ENCODE measurements at regions of chr1 and their contacts with region 1.

Region 1: GRCh38 chr1:184805667-184806295 is 51.1 kb upstream of the EDEM3 start:
- DNase-seq: peak; percentile 49 to 79 (median 68)
- ATAC-seq: peak; percentile 94
- H3K4me3 ChIP-seq: no peak overlapping the region
- H3K4me3 Mint-ChIP-seq: peak overlapping the region in 2 of 10 donors; percentile 2 to 27
- H3K27ac ChIP-seq: no peak overlapping the region
- H3K27ac Mint-ChIP-seq: peak overlapping the region in 2 of 9 donors; percentile 7 to 16
- H3K4me1 ChIP-seq: no peaks in the 10 kb centered on the region
- H3K4me1 Mint-ChIP-seq: peaks cover 4 to 6% (median 5%) of the 10 kb centered on the region in 7 donors
- H3K27me3 ChIP-seq: no peaks in the 10 kb centered on the region
- H3K27me3 Mint-ChIP-seq: no peaks in the 10 kb centered on the region

Region 2: DNA sequence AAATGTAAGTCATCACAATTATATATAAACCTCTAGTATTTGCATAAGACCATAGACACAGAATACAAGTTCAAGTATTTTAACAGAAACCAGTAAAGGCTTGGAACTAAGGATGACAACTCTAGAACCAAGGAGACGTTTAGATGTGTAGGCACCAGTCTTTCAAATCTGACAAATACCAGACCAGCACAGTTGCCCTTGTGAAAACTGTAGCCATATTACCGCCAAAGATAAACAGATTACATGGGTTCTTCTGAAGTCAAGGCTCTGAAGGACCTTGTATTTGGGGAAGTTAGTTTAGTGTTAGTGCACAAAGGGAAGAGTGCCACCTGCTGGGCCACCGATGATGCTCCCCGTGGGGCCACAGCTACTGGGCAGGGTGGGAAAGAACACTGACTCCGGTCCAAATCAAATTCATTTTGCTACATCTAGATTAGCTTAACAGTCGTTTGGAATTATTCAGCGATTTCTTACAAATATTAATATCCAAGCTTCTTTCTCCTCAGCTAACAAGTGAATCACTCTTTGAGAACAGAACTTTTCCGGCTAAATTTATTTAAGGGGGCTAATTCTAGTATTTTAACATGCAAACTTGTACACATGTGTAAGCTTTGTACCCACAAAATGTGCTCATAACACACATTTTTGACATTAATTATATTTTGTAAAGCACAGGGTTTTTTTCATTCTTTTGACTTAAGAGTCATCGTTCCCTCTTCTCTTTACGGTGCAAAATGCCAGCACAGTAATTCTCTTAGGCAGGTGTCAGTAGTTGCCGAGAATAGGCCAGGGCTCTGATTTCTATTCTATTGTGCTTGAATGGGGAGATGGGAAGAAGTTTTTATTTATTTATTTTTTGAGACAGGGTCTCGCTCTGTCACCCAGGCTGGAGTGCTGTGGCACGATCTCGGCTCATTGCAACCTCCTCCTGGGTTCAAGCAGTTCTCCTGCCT is 176.5 kb after region 1 on chr1:
- CTCF ChIA-PET with region 1: interaction called, 28 read pairs
- POLR2A ChIA-PET with region 1: no interaction called
- intact Hi-C with region 1: loop called (anchors 1 kb)
- DNase-seq: peak; percentile 28 to 69 (median 47)
- ATAC-seq: peak; percentile 99
- H3K4me3 ChIP-seq: no peak overlapping the region
- H3K4me3 Mint-ChIP-seq: no peak overlapping the region
- H3K27ac ChIP-seq: no peak overlapping the region
- H3K27ac Mint-ChIP-seq: no peak overlapping the region
- H3K4me1 ChIP-seq: no peaks in the 10 kb centered on the region
- H3K4me1 Mint-ChIP-seq: peaks cover 0 to 7% (median 0%) of the 10 kb centered on the region in 7 donors
- H3K27me3 ChIP-seq: no peaks in the 10 kb centered on the region
- H3K27me3 Mint-ChIP-seq: peaks cover 17 to 45% (median 29%) of the 10 kb centered on the region in 5 donors

Region 3: GRCh38 chr1:185170291-185170848 is 364.6 kb after region 1 on chr1:
- CTCF ChIA-PET with region 1: interaction called, 28 read pairs
- POLR2A ChIA-PET with region 1: no interaction called
- intact Hi-C with region 1: loop called (anchors 1 kb)
- DNase-seq: peak in 8 of 9 donors; percentile 37 to 71 (median 65)
- ATAC-seq: peak; percentile 84
- H3K4me3 ChIP-seq: no peak overlapping the region
- H3K4me3 Mint-ChIP-seq: peak overlapping the region in 4 of 10 donors; percentile 35 to 56 (median 53)
- H3K27ac ChIP-seq: no peak overlapping the region
- H3K27ac Mint-ChIP-seq: peak overlapping the region in 4 of 9 donors; percentile 6 to 62 (median 43)
- H3K4me1 ChIP-seq: peaks cover 0 to 4% of the 10 kb centered on the region in 2 donors
- H3K4me1 Mint-ChIP-seq: peaks cover 0 to 17% (median 5%) of the 10 kb centered on the region in 7 donors
- H3K27me3 ChIP-seq: no peaks in the 10 kb centered on the region
- H3K27me3 Mint-ChIP-seq: no peaks in the 10 kb centered on the region

Region 4: GRCh38 chr1:185309566-185309965 is 503.8 kb after region 1 on chr1:
- CTCF ChIA-PET with region 1: interaction called, 3 read pairs
- POLR2A ChIA-PET with region 1: no interaction called
- intact Hi-C with region 1: loop called in 1 of 2 experiments (anchors 5 kb)
- DNase-seq: no peak
- ATAC-seq: no peak
- H3K4me3 ChIP-seq: no peak overlapping the region
- H3K4me3 Mint-ChIP-seq: no peak overlapping the region
- H3K27ac ChIP-seq: no peak overlapping the region
- H3K27ac Mint-ChIP-seq: no peak overlapping the region
- H3K4me1 ChIP-seq: peaks cover 26 to 28% of the 10 kb centered on the region in 2 donors
- H3K4me1 Mint-ChIP-seq: peaks cover 35 to 59% (median 41%) of the 10 kb centered on the region in 7 donors
- H3K27me3 ChIP-seq: no peaks in the 10 kb centered on the region
- H3K27me3 Mint-ChIP-seq: no peaks in the 10 kb centered on the region

Region 5: DNA sequence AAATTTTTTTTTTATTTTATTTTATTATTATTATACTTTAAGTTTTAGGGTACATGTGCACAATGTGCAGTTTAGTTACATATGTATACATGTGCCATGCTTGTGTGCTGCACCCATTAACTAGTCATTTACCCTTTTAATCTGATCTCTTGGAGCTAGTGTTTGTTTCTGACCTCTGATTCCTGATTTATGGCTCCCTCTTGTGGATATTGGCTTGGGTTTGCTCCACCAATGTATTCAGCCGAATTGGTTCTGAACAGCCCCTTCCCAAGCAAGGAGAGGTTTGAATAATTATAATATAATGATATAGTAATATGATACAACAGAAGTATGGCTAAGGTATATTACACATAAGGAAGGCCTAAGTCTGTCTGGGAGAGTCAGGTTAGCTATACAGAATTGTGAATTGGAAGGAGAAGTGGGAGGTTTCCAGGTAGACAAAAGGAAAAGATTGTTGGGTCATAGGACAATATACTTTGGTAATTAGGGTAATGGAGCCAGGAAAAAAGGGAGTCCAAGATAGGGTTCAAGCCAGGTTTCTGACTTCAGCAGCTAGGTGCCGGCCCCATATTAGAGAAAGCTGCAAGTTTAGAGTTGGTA is 875.4 kb after region 1 on chr1:
- CTCF ChIA-PET with region 1: interaction called, 7 read pairs
- POLR2A ChIA-PET with region 1: no interaction called
- intact Hi-C with region 1: loop called (anchors 1 to 5 kb)
- DNase-seq: peak in 6 of 9 donors; percentile 19 to 53 (median 40)
- ATAC-seq: peak; percentile 65
- H3K4me3 ChIP-seq: no peak overlapping the region
- H3K4me3 Mint-ChIP-seq: peak overlapping the region in 2 of 10 donors; percentile 12 to 39
- H3K27ac ChIP-seq: no peak overlapping the region
- H3K27ac Mint-ChIP-seq: peak overlapping the region in 1 of 9 donors; percentile 14
- H3K4me1 ChIP-seq: peaks cover 4 to 13% of the 10 kb centered on the region in 2 donors
- H3K4me1 Mint-ChIP-seq: peaks cover 13 to 41% (median 28%) of the 10 kb centered on the region in 7 donors
- H3K27me3 ChIP-seq: no peaks in the 10 kb centered on the region
- H3K27me3 Mint-ChIP-seq: peaks cover 0 to 16% (median 0%) of the 10 kb centered on the region in 5 donors

Region 6: DNA sequence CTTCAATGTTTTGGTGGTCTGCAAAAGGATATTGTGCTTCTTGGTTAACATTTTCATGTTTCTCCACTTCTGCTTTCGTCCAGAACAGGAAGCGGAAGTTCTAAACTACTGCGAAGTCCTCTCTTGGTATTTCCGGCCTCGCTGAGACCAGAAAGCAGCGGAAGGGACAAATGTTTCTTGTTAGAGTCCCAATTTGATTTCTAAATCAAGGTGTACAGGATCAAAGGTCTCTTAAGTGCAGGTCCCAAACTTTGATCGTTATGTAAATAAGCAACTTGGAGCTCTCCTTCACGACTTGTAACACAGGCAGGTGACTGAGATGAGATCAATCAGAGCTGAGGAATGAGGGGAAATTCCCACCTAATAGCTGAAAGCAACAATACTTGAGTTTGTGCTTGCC is 888.3 kb after region 1 on chr1:
- CTCF ChIA-PET with region 1: interaction called, 15 read pairs
- POLR2A ChIA-PET with region 1: interaction called, 5 read pairs
- intact Hi-C with region 1: loop called (anchors 1 to 2 kb)
- DNase-seq: peak in 4 of 9 donors; percentile 20 to 26 (median 22)
- ATAC-seq: peak; percentile 60
- H3K4me3 ChIP-seq: peak overlapping the region; percentile 31
- H3K4me3 Mint-ChIP-seq: peak overlapping the region; percentile 73 to 85 (median 78)
- H3K27ac ChIP-seq: peak overlapping the region; percentile 50
- H3K27ac Mint-ChIP-seq: peak overlapping the region; percentile 77 to 96 (median 88)
- H3K4me1 ChIP-seq: peaks cover 0 to 17% of the 10 kb centered on the region in 2 donors
- H3K4me1 Mint-ChIP-seq: peaks cover 11 to 27% (median 14%) of the 10 kb centered on the region in 7 donors
- H3K27me3 ChIP-seq: no peaks in the 10 kb centered on the region
- H3K27me3 Mint-ChIP-seq: peaks cover 0 to 27% (median 9%) of the 10 kb centered on the region in 5 donors

Region 7: GRCh38 chr1:186212544-186213226 is 1406.9 kb after region 1 on chr1:
- CTCF ChIA-PET with region 1: no interaction called
- POLR2A ChIA-PET with region 1: no interaction called
- intact Hi-C with region 1: loop called in 1 of 2 experiments (anchors 1 kb)
- DNase-seq: peak in 6 of 9 donors; percentile 12 to 35 (median 28)
- ATAC-seq: peak; percentile 57
- H3K4me3 ChIP-seq: no peak overlapping the region
- H3K4me3 Mint-ChIP-seq: no peak overlapping the region
- H3K27ac ChIP-seq: no peak overlapping the region
- H3K27ac Mint-ChIP-seq: no peak overlapping the region
- H3K4me1 ChIP-seq: no peaks in the 10 kb centered on the region
- H3K4me1 Mint-ChIP-seq: peaks cover 0 to 2% (median 0%) of the 10 kb centered on the region in 7 donors
- H3K27me3 ChIP-seq: no peaks in the 10 kb centered on the region
- H3K27me3 Mint-ChIP-seq: peaks cover 24 to 53% (median 47%) of the 10 kb centered on the region in 5 donors

Measured in naive thymus-derived CD4-positive, alpha-beta T cell (primary cell).